CD4-positive, alpha-beta memory T cell (primary cell): ENCODE measurements at regions of chr3 and their contacts with region 1.

Region 1: DNA sequence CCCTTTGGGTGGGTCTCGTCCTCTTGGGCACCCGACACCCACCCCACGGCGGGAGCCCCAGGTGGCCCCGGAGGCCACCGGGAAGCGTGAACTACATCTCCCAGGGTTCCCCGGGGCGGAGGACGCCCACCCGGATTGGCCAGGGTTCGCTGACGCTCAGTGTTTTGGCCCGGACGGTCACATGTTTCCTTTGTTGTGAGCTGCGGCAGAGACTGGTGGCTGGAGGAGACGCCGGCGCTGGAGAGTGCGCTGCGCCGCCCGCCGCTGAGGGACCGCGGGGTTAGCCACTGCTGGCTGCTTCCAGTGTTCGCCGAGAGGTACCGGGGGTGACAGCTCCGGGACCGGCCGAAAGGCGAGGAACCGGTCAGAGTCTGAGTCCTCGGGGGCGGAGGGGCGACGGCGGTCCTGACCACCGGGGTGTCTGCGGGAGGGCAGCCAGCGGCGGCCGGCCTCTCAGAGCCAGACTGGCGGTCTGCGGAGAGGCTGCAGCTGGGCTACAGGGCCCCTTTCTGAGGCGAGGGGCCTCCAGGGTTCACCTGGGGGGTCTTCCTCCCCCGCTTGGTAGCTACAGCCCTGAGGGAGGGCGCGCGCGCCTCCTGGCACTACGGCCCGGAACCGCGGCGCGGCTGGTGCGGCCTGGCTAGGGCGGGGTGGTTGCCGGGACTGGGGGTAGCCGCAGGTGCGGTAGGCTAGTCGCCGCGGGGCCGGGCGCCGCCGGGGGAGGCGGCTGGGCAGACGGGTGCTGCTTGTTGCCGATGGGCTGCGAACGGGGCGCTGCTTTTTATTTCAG is at the start of gene KLHL24:
- DNase-seq: peak; percentile 87 to 92 (median 88)
- H3K4me3 ChIP-seq: peak within 1 kb of the TSS; percentile 33 to 97
- H3K4me3 Mint-ChIP-seq: peak within 1 kb of the TSS; percentile 93 to 97 (median 94)
- H3K27ac ChIP-seq: peak within 1 kb of the TSS; percentile 86
- H3K27ac Mint-ChIP-seq: peak within 1 kb of the TSS; percentile 93 to 98 (median 97)
- H3K4me1 ChIP-seq: peaks cover 28% of the 10 kb centered on the region
- H3K4me1 Mint-ChIP-seq: peaks cover 10 to 43% (median 29%) of the 10 kb centered on the region in 4 donors
- H3K27me3 ChIP-seq: no peaks in the 10 kb centered on the region
- H3K27me3 Mint-ChIP-seq: no peaks in the 10 kb centered on the region
- total RNA-seq, gene KLHL24: 107 to 108 TPM

Region 2: DNA sequence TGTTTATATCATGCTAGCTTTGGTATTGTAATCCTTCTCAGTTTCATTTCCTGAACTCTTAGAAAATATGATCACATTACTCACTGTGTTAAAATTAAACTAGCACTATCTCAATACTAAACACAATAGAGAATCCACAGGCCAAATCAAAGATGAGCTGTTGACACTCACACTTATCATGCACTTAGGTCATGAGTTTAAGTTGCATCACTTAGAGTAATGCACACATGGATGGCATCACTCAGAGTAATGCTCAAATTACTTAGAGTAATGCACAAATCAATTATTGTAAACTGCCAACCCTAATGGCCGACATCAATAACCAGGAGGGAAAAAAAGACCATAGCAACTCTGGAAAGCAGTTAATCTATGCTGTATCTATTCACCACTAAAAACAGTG is 167.2 kb before region 1 on chr3:
- CTCF ChIA-PET with region 1: interaction called, 5 read pairs
- POLR2A ChIA-PET with region 1: no interaction called
- intact Hi-C with region 1: loop called (anchors 1 kb)
- DNase-seq: no peak
- H3K4me3 ChIP-seq: no peak overlapping the region
- H3K4me3 Mint-ChIP-seq: no peak overlapping the region
- H3K27ac ChIP-seq: no peak overlapping the region
- H3K27ac Mint-ChIP-seq: no peak overlapping the region
- H3K4me1 ChIP-seq: peaks cover 7% of the 10 kb centered on the region
- H3K4me1 Mint-ChIP-seq: peaks cover 2 to 6% (median 6%) of the 10 kb centered on the region in 4 donors
- H3K27me3 ChIP-seq: no peaks in the 10 kb centered on the region
- H3K27me3 Mint-ChIP-seq: no peaks in the 10 kb centered on the region

Region 3: DNA sequence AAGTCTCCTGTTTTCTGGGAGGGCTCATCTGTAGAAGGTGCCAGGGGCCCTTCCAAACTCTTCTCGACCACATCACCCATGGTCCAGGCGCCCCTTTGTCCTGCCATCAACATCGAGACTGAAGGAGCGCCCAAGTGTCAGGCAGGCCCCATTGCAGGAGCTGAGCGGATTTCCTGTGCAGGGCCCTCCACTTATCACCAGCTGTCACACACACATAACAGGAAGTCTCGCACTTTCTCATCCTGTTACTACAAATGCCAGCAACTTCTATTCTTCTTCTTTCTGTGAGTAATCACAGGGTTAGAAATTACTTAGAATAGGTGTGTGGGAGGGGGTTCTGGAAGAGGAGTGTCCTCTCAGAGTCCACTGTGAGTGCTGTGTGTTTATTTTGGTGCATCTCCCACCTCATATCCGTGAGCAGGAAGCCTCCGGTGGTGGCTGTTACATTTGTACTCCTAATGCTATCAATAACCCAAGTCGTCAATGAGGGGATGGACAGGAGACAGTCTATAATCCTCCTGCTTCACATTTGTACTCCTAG is 80.0 kb before region 1 on chr3 and contains the start of gene KLHL6:
- CTCF ChIA-PET with region 1: no interaction called
- POLR2A ChIA-PET with region 1: interaction called, 21 read pairs
- intact Hi-C with region 1: loop called (anchors 1 kb)
- DNase-seq: peak; percentile 60 to 83 (median 69)
- H3K4me3 ChIP-seq: peak within 1 kb of the TSS; percentile 68 to 70
- H3K4me3 Mint-ChIP-seq: peak within 1 kb of the TSS; percentile 97 to 100 (median 99)
- H3K27ac ChIP-seq: peak within 1 kb of the TSS; percentile 80
- H3K27ac Mint-ChIP-seq: peak within 1 kb of the TSS; percentile 96 to 99 (median 98)
- H3K4me1 ChIP-seq: peaks cover 47% of the 10 kb centered on the region
- H3K4me1 Mint-ChIP-seq: peaks cover 34 to 58% (median 46%) of the 10 kb centered on the region in 4 donors
- H3K27me3 ChIP-seq: no peaks in the 10 kb centered on the region
- H3K27me3 Mint-ChIP-seq: no peaks in the 10 kb centered on the region
- total RNA-seq, gene KLHL6: 55.9 to 56.1 TPM

Region 4: DNA sequence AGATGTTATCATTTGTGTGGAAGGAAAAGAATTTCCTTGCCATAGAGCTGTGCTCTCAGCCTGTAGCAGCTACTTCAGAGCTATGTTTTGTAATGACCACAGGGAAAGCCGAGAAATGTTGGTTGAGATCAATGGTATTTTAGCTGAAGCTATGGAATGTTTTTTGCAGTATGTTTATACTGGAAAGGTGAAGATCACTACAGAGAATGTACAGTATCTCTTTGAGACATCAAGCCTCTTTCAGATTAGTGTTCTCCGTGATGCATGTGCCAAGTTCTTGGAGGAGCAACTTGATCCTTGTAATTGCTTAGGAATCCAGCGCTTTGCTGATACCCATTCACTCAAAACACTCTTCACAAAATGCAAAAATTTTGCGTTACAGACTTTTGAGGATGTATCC is 14.9 kb after region 1 on chr3:
- CTCF ChIA-PET with region 1: interaction called, 3 read pairs
- POLR2A ChIA-PET with region 1: interaction called, 20 read pairs
- intact Hi-C with region 1: no loop called
- DNase-seq: no peak
- H3K4me3 ChIP-seq: no peak overlapping the region
- H3K4me3 Mint-ChIP-seq: peak overlapping the region in 1 of 8 donors; percentile 4
- H3K27ac ChIP-seq: no peak overlapping the region
- H3K27ac Mint-ChIP-seq: no peak overlapping the region
- H3K4me1 ChIP-seq: no peaks in the 10 kb centered on the region
- H3K4me1 Mint-ChIP-seq: peaks cover 0 to 8% (median 5%) of the 10 kb centered on the region in 4 donors
- H3K27me3 ChIP-seq: no peaks in the 10 kb centered on the region
- H3K27me3 Mint-ChIP-seq: no peaks in the 10 kb centered on the region

Region 5: GRCh38 chr3:184185461-184186308 is 550.1 kb after region 1 on chr3 and contains the start of gene ABCF3:
- CTCF ChIA-PET with region 1: no interaction called
- POLR2A ChIA-PET with region 1: no interaction called
- intact Hi-C with region 1: loop called (anchors 5 kb)
- DNase-seq: peak; percentile 98 to 100 (median 99)
- H3K4me3 ChIP-seq: peak within 1 kb of the TSS; percentile 87 to 98
- H3K4me3 Mint-ChIP-seq: peak within 1 kb of the TSS; percentile 98 to 99 (median 98)
- H3K27ac ChIP-seq: peak within 1 kb of the TSS; percentile 80
- H3K27ac Mint-ChIP-seq: peak within 1 kb of the TSS; percentile 92 to 99 (median 97)
- H3K4me1 ChIP-seq: peaks cover 30% of the 10 kb centered on the region
- H3K4me1 Mint-ChIP-seq: peaks cover 26 to 47% (median 36%) of the 10 kb centered on the region in 4 donors
- H3K27me3 ChIP-seq: no peaks in the 10 kb centered on the region
- H3K27me3 Mint-ChIP-seq: no peaks in the 10 kb centered on the region
- total RNA-seq, gene ABCF3: 122 to 124 TPM